ENCODE measurements at regions of chr3 and their contacts with region 1.

Region 1: DNA sequence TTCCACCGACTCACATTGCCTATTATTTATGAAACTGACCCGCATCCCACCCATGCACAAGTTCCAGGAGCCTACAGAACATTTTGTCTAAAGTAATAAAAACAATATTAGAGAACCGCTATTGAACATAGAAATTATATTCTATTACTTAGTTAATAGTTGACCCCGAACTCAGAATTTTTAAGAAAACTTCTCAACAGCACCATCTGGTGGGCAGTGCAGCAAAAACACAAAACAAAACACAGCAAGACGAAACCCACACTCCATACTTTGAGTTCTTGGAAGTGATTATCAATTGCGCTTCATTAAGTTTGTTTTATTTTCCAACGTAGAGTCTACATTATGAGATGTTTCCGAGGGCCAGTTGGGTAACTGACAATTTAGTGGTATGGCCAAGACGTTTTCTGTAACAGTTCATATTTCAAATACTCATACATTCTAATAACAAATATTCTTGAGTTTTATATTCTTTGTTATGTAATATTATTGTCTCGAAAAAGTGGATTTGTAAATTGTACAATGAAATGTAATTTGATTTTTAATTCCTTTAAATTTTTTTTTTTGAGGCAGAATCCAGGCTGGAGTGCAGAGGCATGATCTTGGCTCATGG is 24.0 kb upstream of the C3orf70 start:
- DNase-seq: no peak
- H3K4me3 ChIP-seq: no peak overlapping the region
- CTCF ChIP-seq: no peak
- POLR2A ChIP-seq: no peak

Region 2: GRCh38 chr3:184884359-184885017 is 292.4 kb before region 1 on chr3:
- intact Hi-C with region 1: loop called (anchors 10 kb)
- DNase-seq: no peak
- H3K4me3 ChIP-seq: no peak overlapping the region
- CTCF ChIP-seq: no peak
- POLR2A ChIP-seq: no peak

Measured in lower leg skin (tissue), 4 donors.